ENCODE measurements at regions of chr5 and their contacts with region 1.

Region 1: GRCh38 chr5:137660349-137660817 is 75.5 kb downstream of the KLHL3 start:
- DNase-seq: peak in 9 of 10 donors; percentile 57 to 85 (median 69)
- H3K4me3 ChIP-seq: no peak overlapping the region
- H3K27ac ChIP-seq: peak overlapping the region in 4 of 59 donors; percentile 11 to 53 (median 41)
- H3K27me3 ChIP-seq: no peaks in the 10 kb centered on the region
- CTCF ChIP-seq: peak; percentile 53 to 90 (median 78)

Region 2: GRCh38 chr5:137743031-137743640 is 82.8 kb after region 1 on chr5:
- intact Hi-C with region 1: loop called (anchors 2 to 10 kb)
- DNase-seq: peak in 5 of 10 donors; percentile 28 to 71 (median 44)
- H3K4me3 ChIP-seq: no peak overlapping the region
- H3K27ac ChIP-seq: no peak overlapping the region
- H3K27me3 ChIP-seq: no peaks in the 10 kb centered on the region
- CTCF ChIP-seq: peak; percentile 38 to 83 (median 70)

Region 3: GRCh38 chr5:137822158-137822764 is 161.9 kb after region 1 on chr5:
- intact Hi-C with region 1: no loop called
- DNase-seq: peak in 7 of 10 donors; percentile 15 to 67 (median 42)
- H3K4me3 ChIP-seq: no peak overlapping the region
- H3K27ac ChIP-seq: peak overlapping the region in 22 of 59 donors; percentile 7 to 67 (median 31)
- H3K27me3 ChIP-seq: no peaks in the 10 kb centered on the region
- CTCF ChIP-seq: peak in 53 of 56 donors; percentile 23 to 73 (median 50)

Region 4: GRCh38 chr5:138138949-138139780 is 478.8 kb after region 1 on chr5 and contains the start of gene NME5:
- intact Hi-C with region 1: loop called in 1 of 2 experiments (anchors 10 kb)
- DNase-seq: peak; percentile 57 to 90 (median 84)
- H3K4me3 ChIP-seq: peak within 1 kb of the TSS; percentile 47 to 88 (median 75)
- H3K27ac ChIP-seq: peak within 1 kb of the TSS in 26 of 59 donors; percentile 3 to 73 (median 46)
- H3K27me3 ChIP-seq: no peaks in the 10 kb centered on the region
- CTCF ChIP-seq: peak in 2 of 56 donors; percentile 13 to 15
- total RNA-seq, gene NME5: 12.9 to 48.5 (median 31.0) TPM